WTC11 (cell line): ENCODE measurements at regions of chr2 and their contacts with region 1.

Region 1: GRCh38 chr2:223860809-223861738 is 23.7 kb upstream of the AP1S3 start:
- DNase-seq: no peak
- ATAC-seq: no peak
- H3K4me3 Mint-ChIP-seq: no peak overlapping the region
- H3K27ac Mint-ChIP-seq: 0 out of 2 replicates have a peak overlapping the region, but pooled peaks have one; percentile 87
- H3K4me1 Mint-ChIP-seq: peaks cover 12% of the 10 kb centered on the region
- H3K27me3 Mint-ChIP-seq: no peaks in the 10 kb centered on the region
- CTCF ChIP-seq: no peak

Region 2: DNA sequence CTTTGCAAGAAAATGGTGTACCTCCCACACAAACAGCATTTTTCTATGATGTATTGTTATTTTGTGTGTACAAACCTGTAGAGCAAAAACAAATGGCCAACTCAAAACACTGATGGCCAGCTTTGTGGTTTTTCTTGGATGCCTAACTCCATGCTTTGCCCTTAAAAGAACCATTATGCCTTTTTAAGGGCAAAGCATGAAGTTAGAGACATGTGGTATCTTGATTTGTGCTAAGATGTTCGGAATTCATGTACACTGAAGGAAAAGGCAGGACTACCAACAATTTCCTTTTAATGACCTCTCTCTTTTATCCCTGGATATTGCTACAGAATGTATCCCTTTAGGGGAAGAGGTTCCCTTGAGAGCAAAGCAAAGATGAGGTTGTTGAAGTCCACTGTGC is 532.5 kb before region 1 on chr2:
- CTCF ChIA-PET with region 1: no interaction called
- POLR2A ChIA-PET with region 1: no interaction called
- DNase-seq: no peak
- ATAC-seq: no peak
- H3K4me3 Mint-ChIP-seq: no peak overlapping the region
- H3K27ac Mint-ChIP-seq: no peak overlapping the region
- H3K4me1 Mint-ChIP-seq: peaks cover 7% of the 10 kb centered on the region; the same call in 1 of the 2 replicates
- H3K27me3 Mint-ChIP-seq: peaks cover 7% of the 10 kb centered on the region; the same call in 1 of the 2 replicates
- CTCF ChIP-seq: no peak

Region 3: DNA sequence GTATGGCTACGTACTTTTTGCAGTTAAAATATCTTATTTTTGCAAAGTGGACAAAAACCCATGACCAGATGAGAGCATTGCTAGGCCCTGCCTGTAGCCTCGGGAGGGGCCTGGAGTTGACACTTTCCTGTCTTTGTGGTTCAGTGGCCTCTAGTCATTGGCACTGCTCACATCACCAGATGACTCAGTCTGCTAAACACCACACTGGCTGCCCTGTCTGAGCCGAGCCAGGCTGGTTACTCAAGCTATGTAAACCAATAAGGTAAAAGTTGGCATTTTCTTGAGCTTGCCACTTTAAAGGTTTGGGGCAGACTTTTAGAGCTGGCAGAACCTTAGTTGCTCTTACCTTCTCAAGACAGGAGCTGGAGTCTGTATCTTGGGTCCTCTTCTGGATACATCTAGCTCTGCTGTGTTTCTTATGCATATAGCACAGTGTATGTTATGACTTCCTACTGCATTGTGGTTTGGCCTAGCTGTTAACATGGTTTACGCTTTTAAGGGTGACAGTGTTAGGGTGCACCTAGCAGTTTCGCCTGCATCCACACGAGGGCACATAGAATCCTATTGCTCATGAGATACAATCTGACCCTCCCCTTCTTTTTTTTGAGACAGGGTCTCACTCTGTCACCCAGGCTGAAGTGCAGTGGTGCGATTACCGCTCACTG is 100.1 kb before region 1 on chr2:
- CTCF ChIA-PET with region 1: interaction called, 15 read pairs
- POLR2A ChIA-PET with region 1: no interaction called
- DNase-seq: peak; percentile 25
- ATAC-seq: peak; percentile 94
- H3K4me3 Mint-ChIP-seq: no peak overlapping the region
- H3K27ac Mint-ChIP-seq: no peak overlapping the region
- H3K4me1 Mint-ChIP-seq: no peaks in the 10 kb centered on the region
- H3K27me3 Mint-ChIP-seq: no peaks in the 10 kb centered on the region; the same call in 1 of the 2 replicates
- CTCF ChIP-seq: no peak

Region 4: GRCh38 chr2:223779877-223780276 is 81.2 kb before region 1 on chr2:
- CTCF ChIA-PET with region 1: interaction called, 14 read pairs
- POLR2A ChIA-PET with region 1: no interaction called
- DNase-seq: peak; percentile 64
- ATAC-seq: peak; percentile 92
- H3K4me3 Mint-ChIP-seq: no peak overlapping the region
- H3K27ac Mint-ChIP-seq: no peak overlapping the region
- H3K4me1 Mint-ChIP-seq: peaks cover 14% of the 10 kb centered on the region
- H3K27me3 Mint-ChIP-seq: no peaks in the 10 kb centered on the region
- CTCF ChIP-seq: peak; percentile 40

Region 5: DNA sequence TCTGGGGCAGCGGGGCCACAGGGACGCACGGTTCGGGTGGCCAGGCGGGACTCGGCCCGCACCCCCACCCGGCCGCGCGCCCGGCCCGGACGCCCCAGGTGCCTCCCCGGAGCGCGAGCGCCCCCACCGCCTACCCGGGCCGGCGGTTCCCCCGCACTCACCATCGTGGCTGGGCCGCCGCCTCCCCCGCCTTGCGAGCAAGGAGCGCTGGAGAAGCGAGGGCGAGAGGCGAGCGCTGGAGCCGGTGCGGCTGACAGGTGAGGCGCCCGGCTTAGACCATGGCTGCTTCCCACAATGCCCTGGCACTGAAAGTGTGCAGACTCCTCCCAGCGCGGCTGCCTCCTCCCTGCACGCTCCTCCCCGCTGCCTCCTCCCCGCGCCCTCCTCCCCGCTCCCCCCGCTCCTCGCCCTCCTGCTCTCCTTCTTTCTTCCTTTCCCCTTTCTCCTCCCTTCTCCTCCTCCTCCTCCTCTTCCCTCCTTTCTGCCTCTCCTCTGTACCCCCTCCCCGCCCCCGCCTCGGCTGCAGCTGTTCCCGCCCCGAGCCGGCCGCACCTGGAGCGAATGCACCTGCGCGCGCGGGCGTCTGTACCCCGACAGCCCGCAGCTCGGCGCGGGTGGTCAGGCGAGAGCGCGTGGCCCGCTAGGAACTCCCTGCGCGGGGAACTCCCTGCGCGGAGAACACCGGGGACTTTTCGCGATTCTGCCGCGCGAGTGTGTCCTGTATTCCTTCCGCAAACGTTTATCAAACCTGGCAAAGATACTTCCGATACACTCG is 23.6 kb before region 1 on chr2 and contains the start of gene AP1S3:
- CTCF ChIA-PET with region 1: interaction called, 15 read pairs
- POLR2A ChIA-PET with region 1: no interaction called
- DNase-seq: peak; percentile 90
- ATAC-seq: peak; percentile 94
- H3K4me3 Mint-ChIP-seq: peak within 1 kb of the TSS; percentile 93
- H3K27ac Mint-ChIP-seq: peak within 1 kb of the TSS; percentile 78
- H3K4me1 Mint-ChIP-seq: peaks cover 46% of the 10 kb centered on the region
- H3K27me3 Mint-ChIP-seq: no peaks in the 10 kb centered on the region; the same call in 1 of the 2 replicates
- CTCF ChIP-seq: no peak
- total RNA-seq, gene AP1S3: 12.2 to 17.4 TPM (median 15.8 TPM) in 3 replicates